Caco-2 (cell line): ENCODE measurements at regions of chr19 and their contacts with region 1.

Region 1: GRCh38 chr19:3429581-3430080 is 50.7 kb downstream of the SMIM24 start:
- DNase-seq: peak; percentile 76 to 88
- H3K4me3 ChIP-seq: no peak overlapping the region
- H3K4me3 Mint-ChIP-seq: no peak overlapping the region
- H3K27ac Mint-ChIP-seq: no peak overlapping the region
- H3K4me1 ChIP-seq: no peaks in the 10 kb centered on the region
- H3K4me1 Mint-ChIP-seq: no peaks in the 10 kb centered on the region
- H3K27me3 ChIP-seq: no peaks in the 10 kb centered on the region
- H3K27me3 Mint-ChIP-seq: no peaks in the 10 kb centered on the region
- CTCF ChIP-seq: peak; percentile 90 to 96

Region 2: GRCh38 chr19:3304871-3305423 is 124.7 kb before region 1 on chr19:
- CTCF ChIA-PET with region 1: interaction called, 10 read pairs
- POLR2A ChIA-PET with region 1: no interaction called
- intact Hi-C with region 1: no loop called
- DNase-seq: peak; percentile 50 to 68
- H3K4me3 ChIP-seq: no peak overlapping the region
- H3K4me3 Mint-ChIP-seq: no peak overlapping the region
- H3K27ac Mint-ChIP-seq: no peak overlapping the region
- H3K4me1 ChIP-seq: no peaks in the 10 kb centered on the region
- H3K4me1 Mint-ChIP-seq: no peaks in the 10 kb centered on the region
- H3K27me3 ChIP-seq: no peaks in the 10 kb centered on the region
- H3K27me3 Mint-ChIP-seq: peaks cover 6% of the 10 kb centered on the region
- CTCF ChIP-seq: peak; percentile 70 to 71

Region 3: DNA sequence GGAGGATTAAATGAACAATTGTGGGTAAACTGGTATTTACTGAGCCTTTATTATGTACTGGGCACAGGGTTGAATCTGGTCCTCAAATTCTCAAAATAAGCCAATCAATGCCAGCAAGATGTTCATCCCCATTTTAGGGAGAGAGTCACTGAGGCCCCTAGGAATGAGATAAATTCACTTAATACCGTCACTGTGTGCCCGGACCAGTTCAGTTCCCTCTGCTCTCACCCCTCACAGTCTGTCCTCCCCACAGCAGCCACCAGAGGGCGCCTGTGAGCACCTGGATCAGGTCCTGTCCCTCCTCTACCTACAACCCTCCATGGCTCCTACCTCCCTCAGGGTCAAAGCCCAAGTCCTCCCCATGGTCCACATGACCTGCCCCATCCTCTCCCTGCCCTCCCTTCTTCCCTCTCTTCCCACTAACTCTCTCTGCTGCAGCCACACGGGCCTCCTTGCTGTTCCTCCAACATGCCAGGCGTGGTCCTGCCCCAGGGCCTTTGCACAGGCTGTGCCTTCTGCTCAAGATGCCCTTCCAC is 105.2 kb before region 1 on chr19:
- CTCF ChIA-PET with region 1: interaction called, 12 read pairs
- POLR2A ChIA-PET with region 1: no interaction called
- intact Hi-C with region 1: loop called (anchors 1 kb)
- DNase-seq: peak; percentile 61 to 69
- H3K4me3 ChIP-seq: no peak overlapping the region
- H3K4me3 Mint-ChIP-seq: no peak overlapping the region
- H3K27ac Mint-ChIP-seq: no peak overlapping the region
- H3K4me1 ChIP-seq: no peaks in the 10 kb centered on the region
- H3K4me1 Mint-ChIP-seq: no peaks in the 10 kb centered on the region
- H3K27me3 ChIP-seq: no peaks in the 10 kb centered on the region
- H3K27me3 Mint-ChIP-seq: peaks cover 2% of the 10 kb centered on the region
- CTCF ChIP-seq: peak; percentile 63 to 65

Region 4: GRCh38 chr19:3450796-3451411 is 21.3 kb after region 1 on chr19:
- CTCF ChIA-PET with region 1: no interaction called
- POLR2A ChIA-PET with region 1: no interaction called
- intact Hi-C with region 1: no loop called
- DNase-seq: no peak
- H3K4me3 ChIP-seq: no peak overlapping the region
- H3K4me3 Mint-ChIP-seq: no peak overlapping the region
- H3K27ac Mint-ChIP-seq: no peak overlapping the region
- H3K4me1 ChIP-seq: no peaks in the 10 kb centered on the region
- H3K4me1 Mint-ChIP-seq: no peaks in the 10 kb centered on the region
- H3K27me3 ChIP-seq: no peaks in the 10 kb centered on the region
- H3K27me3 Mint-ChIP-seq: no peaks in the 10 kb centered on the region
- CTCF ChIP-seq: no peak